HepG2 (cell line): ENCODE measurements at regions of chr2 and their contacts with region 1.

Region 1: GRCh38 chr2:172931918-172932520 is 143.6 kb upstream of the MAP3K20 start:
- DNase-seq: peak; percentile 60
- ATAC-seq: peak; percentile 70
- H3K4me3 ChIP-seq: no peak overlapping the region
- H3K27ac ChIP-seq: no peak overlapping the region
- H3K4me1 ChIP-seq: no peaks in the 10 kb centered on the region
- H3K27me3 ChIP-seq: peaks cover 0 to 2% of the 10 kb centered on the region in 2 experiments; a peak in 1 of 5 replicates
- CTCF ChIP-seq: peak; percentile 76
- EP300 ChIP-seq: no peak
- POLR2A ChIP-seq: no peak
- RAD21 ChIP-seq: no peak

Region 2: GRCh38 chr2:172806493-172806892 is 125.5 kb before region 1 on chr2:
- CTCF ChIA-PET with region 1: interaction called, 52 read pairs
- POLR2A ChIA-PET with region 1: no interaction called
- in situ Hi-C with region 1: loop called (anchors 5 kb)
- intact Hi-C with region 1: loop called (anchors 1 kb)
- DNase-seq: peak; percentile 42
- ATAC-seq: peak; percentile 37; the same call in 1 of the 3 replicates
- H3K4me3 ChIP-seq: no peak overlapping the region
- H3K27ac ChIP-seq: no peak overlapping the region
- H3K4me1 ChIP-seq: no peaks in the 10 kb centered on the region
- H3K27me3 ChIP-seq: no peaks in the 10 kb centered on the region
- CTCF ChIP-seq: peak; percentile 88
- EP300 ChIP-seq: no peak
- POLR2A ChIP-seq: no peak
- RAD21 ChIP-seq: peak; percentile 73

Region 3: DNA sequence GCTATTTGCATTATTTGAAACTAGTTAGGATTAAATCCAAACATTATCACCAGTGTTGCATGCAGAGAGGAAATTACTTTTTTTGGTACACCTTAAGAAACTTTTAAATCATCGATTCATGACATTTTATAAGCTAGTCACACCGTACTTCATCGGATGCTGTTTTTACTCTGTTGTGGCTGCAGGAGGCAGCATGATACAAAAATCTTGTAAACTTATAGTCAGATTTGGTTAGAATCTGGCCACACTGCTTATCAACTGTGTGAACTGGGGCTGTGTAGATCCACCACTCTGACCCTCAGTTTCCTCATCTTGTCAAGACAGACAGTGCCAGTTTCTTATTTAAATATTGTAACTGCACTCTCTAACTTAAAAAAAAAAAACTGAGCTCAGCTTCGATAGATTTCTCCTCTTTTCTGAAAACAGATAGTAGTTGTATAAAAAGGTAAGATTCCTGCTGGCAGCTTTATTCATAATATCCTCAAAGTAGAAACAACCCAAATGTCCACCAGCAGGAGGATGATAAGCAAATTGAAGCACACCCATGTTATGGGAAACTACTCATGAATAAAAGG is 118.6 kb before region 1 on chr2:
- CTCF ChIA-PET with region 1: interaction called, 52 read pairs
- POLR2A ChIA-PET with region 1: no interaction called
- in situ Hi-C with region 1: loop called (anchors 5 kb)
- intact Hi-C with region 1: loop called (anchors 1 kb)
- DNase-seq: no peak
- ATAC-seq: peak; percentile 58; the same call in 2 of the 3 replicates
- H3K4me3 ChIP-seq: no peak overlapping the region
- H3K27ac ChIP-seq: no peak overlapping the region
- H3K4me1 ChIP-seq: no peaks in the 10 kb centered on the region
- H3K27me3 ChIP-seq: no peaks in the 10 kb centered on the region; a peak in 1 of 5 replicates
- CTCF ChIP-seq: peak; percentile 48
- EP300 ChIP-seq: no peak
- POLR2A ChIP-seq: no peak
- RAD21 ChIP-seq: no peak

Region 4: DNA sequence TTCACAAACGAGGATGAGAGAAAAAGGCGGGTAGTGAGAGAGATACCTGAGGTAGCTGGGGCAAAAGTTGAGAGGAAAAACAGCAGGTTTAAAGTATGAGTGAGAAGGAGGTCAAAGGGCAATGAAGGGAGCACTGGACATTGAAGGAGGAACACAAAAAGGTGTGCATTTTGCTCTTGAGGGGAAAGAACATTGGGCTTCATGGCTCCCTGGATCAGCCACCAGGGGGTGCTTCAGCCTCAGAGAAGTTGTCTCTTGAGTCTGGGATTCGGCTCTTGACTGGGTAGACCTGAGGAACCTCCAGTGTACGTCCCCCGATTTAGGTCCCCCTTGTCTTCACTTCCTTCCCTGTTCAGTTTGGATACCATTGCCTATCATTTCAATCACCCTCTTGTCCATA is 67.8 kb before region 1 on chr2:
- CTCF ChIA-PET with region 1: interaction called, 8 read pairs
- POLR2A ChIA-PET with region 1: no interaction called
- in situ Hi-C with region 1: loop called (anchors 5 kb)
- intact Hi-C with region 1: loop called (anchors 1 kb)
- DNase-seq: peak; percentile 13
- ATAC-seq: peak; percentile 62
- H3K4me3 ChIP-seq: no peak overlapping the region
- H3K27ac ChIP-seq: no peak overlapping the region
- H3K4me1 ChIP-seq: 0 out of 2 replicates have a peak, but pooled peaks cover 9% of the 10 kb centered on the region
- H3K27me3 ChIP-seq: peaks cover 1 to 20% of the 10 kb centered on the region in 2 experiments; a peak in 3 of 5 replicates
- CTCF ChIP-seq: peak; percentile 78
- EP300 ChIP-seq: no peak
- POLR2A ChIP-seq: no peak
- RAD21 ChIP-seq: no peak

Region 5: GRCh38 chr2:172921532-172922236 is 10.3 kb before region 1 on chr2:
- CTCF ChIA-PET with region 1: no interaction called
- POLR2A ChIA-PET with region 1: no interaction called
- in situ Hi-C with region 1: no loop called
- intact Hi-C with region 1: no loop called
- DNase-seq: no peak
- ATAC-seq: no peak
- H3K4me3 ChIP-seq: no peak overlapping the region
- H3K27ac ChIP-seq: no peak overlapping the region
- H3K4me1 ChIP-seq: no peaks in the 10 kb centered on the region
- H3K27me3 ChIP-seq: peaks cover 0 to 13% of the 10 kb centered on the region in 2 experiments; a peak in 2 of 5 replicates
- CTCF ChIP-seq: no peak
- EP300 ChIP-seq: no peak
- POLR2A ChIP-seq: no peak
- RAD21 ChIP-seq: no peak

Region 6: DNA sequence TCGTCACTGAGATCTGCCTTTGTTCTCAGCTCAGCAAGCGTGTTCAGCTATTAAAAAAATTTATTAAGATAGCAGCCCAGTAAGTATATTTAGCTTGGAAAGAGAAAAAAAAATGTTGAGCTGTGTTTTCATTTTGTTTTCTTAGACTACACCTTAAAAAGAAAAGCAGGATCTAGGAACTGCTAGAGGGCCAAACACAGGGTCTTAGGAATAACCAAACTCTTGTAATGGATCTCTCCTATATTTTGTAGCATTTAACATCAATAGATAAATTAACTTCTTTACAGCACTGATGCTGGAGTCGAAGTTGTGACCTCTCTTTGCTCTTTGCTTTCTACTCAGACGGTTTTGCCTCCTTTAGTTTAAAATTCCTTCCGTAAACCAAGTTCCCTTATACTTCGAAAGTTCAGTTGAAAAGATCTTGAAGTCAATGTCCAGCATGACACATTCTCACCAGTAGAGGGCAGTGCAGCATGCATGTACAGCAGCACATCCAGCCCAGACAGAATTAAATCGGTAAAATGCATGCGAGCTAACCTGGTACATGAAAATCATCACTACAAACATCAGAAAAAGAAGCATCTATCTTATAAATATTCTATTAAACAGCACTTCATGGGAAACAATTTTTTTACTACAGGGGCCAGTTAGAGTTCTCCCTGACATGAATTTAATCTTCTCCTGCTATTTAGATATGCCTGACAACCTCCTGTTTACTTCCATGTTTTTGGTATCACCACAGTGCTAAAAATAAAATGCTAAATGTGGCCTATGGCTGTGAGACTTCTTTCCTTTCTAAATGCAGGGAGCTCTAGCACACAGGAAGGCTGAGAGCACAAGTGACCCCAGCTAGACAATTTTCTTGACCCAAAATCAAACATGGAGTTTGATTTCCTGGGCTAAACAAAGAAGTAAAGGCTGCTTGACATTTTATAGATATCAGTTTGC is 95.4 kb after region 1 on chr2:
- CTCF ChIA-PET with region 1: no interaction called
- POLR2A ChIA-PET with region 1: no interaction called
- in situ Hi-C with region 1: no loop called
- intact Hi-C with region 1: no loop called
- DNase-seq: peak; percentile 79
- ATAC-seq: peak; percentile 85
- H3K4me3 ChIP-seq: no peak overlapping the region
- H3K27ac ChIP-seq: no peak overlapping the region
- H3K4me1 ChIP-seq: no peaks in the 10 kb centered on the region
- H3K27me3 ChIP-seq: peaks cover 2 to 12% of the 10 kb centered on the region in 2 experiments; a peak in 3 of 5 replicates
- CTCF ChIP-seq: peak; percentile 95
- EP300 ChIP-seq: no peak
- POLR2A ChIP-seq: no peak
- RAD21 ChIP-seq: peak; percentile 91